Activated CD8-positive, alpha-beta T cell treated with anti-CD3 and anti-CD28 coated beads, Interleukin-2, amount 10 ng/mL, durations not matched to agents 7 days and 5 days (primary cell): ENCODE measurements at regions of chr15 and their contacts with region 1.

Region 1: GRCh38 chr15:50315814-50316630 is 39.0 kb downstream of the GABPB1 start:
- DNase-seq: no peak
- ATAC-seq: peak; percentile 51
- H3K4me3 Mint-ChIP-seq: no peak overlapping the region
- H3K27ac Mint-ChIP-seq: no peak overlapping the region
- H3K4me1 Mint-ChIP-seq: peaks cover 17% of the 10 kb centered on the region
- H3K27me3 Mint-ChIP-seq: no peaks in the 10 kb centered on the region

Region 2: GRCh38 chr15:49235446-49236124 is 1080.4 kb before region 1 on chr15:
- CTCF ChIA-PET with region 1: interaction called, 10 read pairs
- POLR2A ChIA-PET with region 1: no interaction called
- DNase-seq: peak; percentile 75
- ATAC-seq: peak; percentile 86
- H3K4me3 Mint-ChIP-seq: no peak overlapping the region
- H3K27ac Mint-ChIP-seq: peak overlapping the region; percentile 72
- H3K4me1 Mint-ChIP-seq: peaks cover 16% of the 10 kb centered on the region
- H3K27me3 Mint-ChIP-seq: no peaks in the 10 kb centered on the region

Region 3: GRCh38 chr15:49758856-49759255 is 557.2 kb before region 1 on chr15:
- CTCF ChIA-PET with region 1: no interaction called
- POLR2A ChIA-PET with region 1: no interaction called
- DNase-seq: no peak
- ATAC-seq: no peak
- H3K4me3 Mint-ChIP-seq: no peak overlapping the region
- H3K27ac Mint-ChIP-seq: no peak overlapping the region
- H3K4me1 Mint-ChIP-seq: no peaks in the 10 kb centered on the region
- H3K27me3 Mint-ChIP-seq: no peaks in the 10 kb centered on the region

Region 4: GRCh38 chr15:50182219-50183013 is 133.6 kb before region 1 on chr15:
- CTCF ChIA-PET with region 1: interaction called, 72 read pairs
- POLR2A ChIA-PET with region 1: interaction called, 3 read pairs
- DNase-seq: peak; percentile 72
- ATAC-seq: peak; percentile 77
- H3K4me3 Mint-ChIP-seq: peak overlapping the region; percentile 91
- H3K27ac Mint-ChIP-seq: peak overlapping the region; percentile 91
- H3K4me1 Mint-ChIP-seq: peaks cover 40% of the 10 kb centered on the region
- H3K27me3 Mint-ChIP-seq: peaks cover 9% of the 10 kb centered on the region

Region 5: GRCh38 chr15:50247819-50248655 is 68.0 kb before region 1 on chr15:
- CTCF ChIA-PET with region 1: interaction called, 13 read pairs
- POLR2A ChIA-PET with region 1: interaction called, 3 read pairs
- DNase-seq: peak; percentile 84
- ATAC-seq: peak; percentile 100
- H3K4me3 Mint-ChIP-seq: peak overlapping the region; percentile 62
- H3K27ac Mint-ChIP-seq: peak overlapping the region; percentile 94
- H3K4me1 Mint-ChIP-seq: peaks cover 46% of the 10 kb centered on the region
- H3K27me3 Mint-ChIP-seq: no peaks in the 10 kb centered on the region

Region 6: DNA sequence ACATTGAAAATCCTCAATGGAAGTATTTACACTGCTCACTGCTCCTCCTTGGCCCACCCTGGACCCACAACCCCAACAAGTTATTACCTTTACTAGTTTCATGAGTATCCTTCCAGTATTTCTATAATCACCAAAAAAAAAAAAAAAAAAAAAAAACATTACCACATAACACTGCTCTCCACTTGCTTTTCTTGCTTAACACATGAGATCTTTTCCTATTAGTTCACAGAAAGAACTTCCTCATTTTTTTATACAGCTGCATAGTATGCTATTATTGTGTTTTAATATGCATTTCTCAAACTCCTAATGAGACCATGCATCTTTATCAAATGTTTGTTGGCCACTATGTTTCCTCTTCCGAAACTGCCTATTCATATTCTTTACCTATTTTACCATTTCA is 24.4 kb after region 1 on chr15:
- CTCF ChIA-PET with region 1: interaction called, 11 read pairs
- POLR2A ChIA-PET with region 1: no interaction called
- DNase-seq: no peak
- ATAC-seq: no peak
- H3K4me3 Mint-ChIP-seq: no peak overlapping the region
- H3K27ac Mint-ChIP-seq: no peak overlapping the region
- H3K4me1 Mint-ChIP-seq: peaks cover 6% of the 10 kb centered on the region
- H3K27me3 Mint-ChIP-seq: no peaks in the 10 kb centered on the region

Region 7: GRCh38 chr15:50435772-50436171 is 119.8 kb after region 1 on chr15:
- CTCF ChIA-PET with region 1: no interaction called
- POLR2A ChIA-PET with region 1: no interaction called
- DNase-seq: no peak
- ATAC-seq: no peak
- H3K4me3 Mint-ChIP-seq: no peak overlapping the region
- H3K27ac Mint-ChIP-seq: no peak overlapping the region
- H3K4me1 Mint-ChIP-seq: peaks cover 5% of the 10 kb centered on the region
- H3K27me3 Mint-ChIP-seq: no peaks in the 10 kb centered on the region